ENCODE measurements at regions of chr14 and their contacts with region 1.

Region 1: DNA sequence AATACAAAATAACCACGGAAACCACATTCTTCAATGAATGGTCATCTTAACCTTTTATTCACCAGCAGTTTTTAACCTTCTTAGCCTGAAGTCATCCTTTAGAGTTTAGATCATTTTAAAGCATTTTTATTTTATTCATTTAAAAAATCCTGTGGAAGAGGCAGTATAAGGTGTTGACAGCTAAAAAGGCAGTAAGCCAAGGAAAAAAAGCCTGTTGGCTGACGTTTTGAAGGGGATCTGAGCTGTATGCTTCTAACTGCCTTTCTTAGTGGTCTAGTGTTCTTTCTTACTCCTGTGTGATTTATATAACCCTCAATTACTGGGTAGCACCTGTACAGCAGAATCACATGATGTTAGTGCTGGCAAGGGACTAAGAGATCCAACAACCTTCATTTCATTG is 438.3 kb upstream of the SEL1L start:
- DNase-seq: no peak
- CTCF ChIP-seq: no peak

Region 2: GRCh38 chr14:81960781-81961180 is 11.1 kb before region 1 on chr14:
- CTCF ChIA-PET with region 1: interaction called, 16 read pairs
- POLR2A ChIA-PET with region 1: no interaction called
- DNase-seq: no peak
- CTCF ChIP-seq: no peak